A673 (cell line): ENCODE measurements at regions of chr1 and their contacts with region 1.

Region 1: GRCh38 chr1:175618559-175618958 is 124.8 kb downstream of the TNR start:
- DNase-seq: no peak
- H3K4me3 ChIP-seq: no peak overlapping the region
- H3K27ac ChIP-seq: no peak overlapping the region
- H3K4me1 ChIP-seq: no peaks in the 10 kb centered on the region
- H3K27me3 ChIP-seq: peaks cover 4% of the 10 kb centered on the region
- CTCF ChIP-seq: no peak

Region 2: DNA sequence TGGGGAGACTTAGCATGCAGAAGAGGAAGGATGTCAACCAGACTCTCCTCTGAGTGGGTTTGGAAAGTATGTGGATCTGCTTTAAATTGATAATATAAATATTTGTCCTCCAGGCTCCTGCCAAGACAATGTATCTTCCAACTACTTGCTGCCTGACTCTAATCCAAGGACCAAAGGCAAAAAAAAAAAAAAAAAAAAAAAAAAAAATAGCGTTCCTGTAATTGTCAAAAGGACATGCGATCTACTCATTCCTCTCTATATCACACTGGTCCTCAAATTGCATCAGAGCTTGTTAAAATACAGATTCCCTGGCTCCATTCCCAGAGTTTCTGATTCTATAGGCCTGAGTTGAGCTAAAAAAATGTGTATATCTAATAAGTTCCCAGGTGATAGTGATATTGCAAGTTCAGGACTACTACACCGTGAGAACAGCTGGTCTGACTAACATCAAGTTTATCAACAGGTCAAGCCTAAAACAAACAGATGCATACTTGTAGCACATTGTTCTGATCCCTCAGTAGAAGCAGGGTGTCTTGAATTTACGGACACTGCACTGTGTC is 16.5 kb before region 1 on chr1:
- CTCF ChIA-PET with region 1: interaction called, 14 read pairs
- POLR2A ChIA-PET with region 1: no interaction called
- intact Hi-C with region 1: no loop called
- DNase-seq: no peak
- H3K4me3 ChIP-seq: no peak overlapping the region
- H3K27ac ChIP-seq: no peak overlapping the region
- H3K4me1 ChIP-seq: no peaks in the 10 kb centered on the region
- H3K27me3 ChIP-seq: peaks cover 2% of the 10 kb centered on the region
- CTCF ChIP-seq: no peak